Posterior vena cava (tissue), 2 donors: ENCODE measurements at regions of chr9 and their contacts with region 1.

Region 1: DNA sequence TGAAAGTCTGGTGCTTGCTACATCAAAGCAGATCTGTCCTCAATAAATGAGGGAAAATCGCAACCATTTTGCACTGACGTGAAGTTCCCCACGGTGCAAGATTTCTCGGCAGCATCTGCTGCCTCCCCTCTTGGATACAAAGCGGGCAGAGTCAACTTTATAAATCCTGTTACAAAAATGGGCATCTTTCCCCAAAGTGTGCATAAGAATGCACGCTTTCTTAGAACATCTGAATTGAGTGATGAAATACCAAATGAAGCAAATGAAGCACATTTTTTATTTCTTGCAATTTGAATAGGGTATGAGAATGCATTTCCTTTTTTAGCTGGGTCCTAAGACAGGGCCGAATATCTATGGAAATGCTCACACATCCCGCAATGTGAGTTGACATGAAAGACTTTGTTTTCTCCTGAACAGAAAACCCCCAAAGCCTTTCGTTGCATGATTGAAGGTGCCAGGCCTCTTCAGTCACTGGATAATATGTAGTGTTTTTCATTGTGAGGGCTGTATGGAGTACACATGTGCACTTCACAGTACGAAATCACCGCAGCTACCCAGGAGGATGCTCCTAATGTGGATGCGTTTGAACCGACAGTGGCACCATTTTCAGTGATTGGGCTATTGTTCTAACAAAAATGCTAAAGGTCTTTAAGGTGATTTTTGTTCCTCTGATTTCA is 19.6 kb upstream of the MAPKAP1 start:
- DNase-seq: no peak

Region 2: DNA sequence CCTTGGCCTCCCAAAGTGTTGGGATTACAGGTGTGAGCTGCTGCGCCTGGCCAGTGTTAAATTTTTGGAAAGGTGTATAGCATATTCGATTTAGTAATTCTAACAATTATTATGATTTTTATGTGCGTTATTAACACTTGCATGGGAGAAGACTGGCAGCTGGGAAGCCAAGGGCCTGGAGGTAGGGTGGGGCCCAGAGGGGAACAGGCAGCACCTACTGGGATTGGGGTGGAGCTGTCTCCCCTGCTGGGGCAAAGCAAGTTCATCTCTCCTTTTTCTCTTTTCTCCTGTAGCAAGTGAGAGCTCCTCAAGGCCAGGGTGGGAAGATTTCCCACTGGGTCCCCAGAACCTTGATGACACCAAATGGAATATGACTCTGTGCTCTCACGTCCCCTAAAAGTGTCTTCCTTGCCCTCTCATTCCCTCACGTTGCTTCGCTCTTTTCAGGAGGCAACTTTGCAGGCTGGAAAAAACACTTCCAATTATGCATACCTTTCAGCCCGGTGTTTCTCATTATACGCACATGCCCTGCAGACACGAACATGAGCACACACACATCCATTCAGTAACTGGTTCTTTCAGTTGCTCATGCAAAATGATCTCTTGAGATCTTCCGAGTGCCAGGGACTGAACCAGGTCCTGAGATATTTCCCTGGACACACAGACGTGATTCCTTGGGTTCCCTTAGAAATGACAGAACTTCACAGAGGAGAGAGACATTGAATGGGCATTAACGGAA is 1738.1 kb before region 1 on chr9:
- intact Hi-C with region 1: no loop called
- DNase-seq: no peak

Region 3: GRCh38 chr9:124786881-124787573 is 939.6 kb before region 1 on chr9:
- intact Hi-C with region 1: loop called in 1 of 2 experiments (anchors 5 kb)
- DNase-seq: peak; percentile 77

Region 4: GRCh38 chr9:125505988-125506438 is 220.6 kb before region 1 on chr9:
- intact Hi-C with region 1: no loop called
- DNase-seq: no peak

Region 5: DNA sequence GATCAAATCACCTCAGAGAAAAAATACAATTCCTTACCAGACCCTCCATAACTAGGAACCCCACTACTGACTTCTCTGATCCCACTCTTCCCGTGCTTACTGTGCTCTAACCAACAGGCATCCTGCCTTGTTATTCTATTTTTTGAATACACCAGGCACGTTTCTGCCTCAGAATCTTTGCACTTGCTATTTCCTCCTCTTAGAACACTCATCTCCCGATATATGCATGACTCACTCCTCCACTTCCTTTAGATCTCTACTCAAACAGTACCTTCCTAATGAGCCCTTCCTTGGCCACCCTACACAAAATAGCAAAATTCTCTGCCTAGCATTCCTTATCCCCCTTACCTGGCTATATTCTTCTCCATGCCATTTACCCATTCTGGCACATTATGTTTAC is 63.5 kb before region 1 on chr9:
- intact Hi-C with region 1: no loop called
- DNase-seq: no peak